Activated B cell treated with CpG ODN at 0.5 μM for 24 hours (primary cell): ENCODE measurements at regions of chr5 and their contacts with region 1.

Region 1: DNA sequence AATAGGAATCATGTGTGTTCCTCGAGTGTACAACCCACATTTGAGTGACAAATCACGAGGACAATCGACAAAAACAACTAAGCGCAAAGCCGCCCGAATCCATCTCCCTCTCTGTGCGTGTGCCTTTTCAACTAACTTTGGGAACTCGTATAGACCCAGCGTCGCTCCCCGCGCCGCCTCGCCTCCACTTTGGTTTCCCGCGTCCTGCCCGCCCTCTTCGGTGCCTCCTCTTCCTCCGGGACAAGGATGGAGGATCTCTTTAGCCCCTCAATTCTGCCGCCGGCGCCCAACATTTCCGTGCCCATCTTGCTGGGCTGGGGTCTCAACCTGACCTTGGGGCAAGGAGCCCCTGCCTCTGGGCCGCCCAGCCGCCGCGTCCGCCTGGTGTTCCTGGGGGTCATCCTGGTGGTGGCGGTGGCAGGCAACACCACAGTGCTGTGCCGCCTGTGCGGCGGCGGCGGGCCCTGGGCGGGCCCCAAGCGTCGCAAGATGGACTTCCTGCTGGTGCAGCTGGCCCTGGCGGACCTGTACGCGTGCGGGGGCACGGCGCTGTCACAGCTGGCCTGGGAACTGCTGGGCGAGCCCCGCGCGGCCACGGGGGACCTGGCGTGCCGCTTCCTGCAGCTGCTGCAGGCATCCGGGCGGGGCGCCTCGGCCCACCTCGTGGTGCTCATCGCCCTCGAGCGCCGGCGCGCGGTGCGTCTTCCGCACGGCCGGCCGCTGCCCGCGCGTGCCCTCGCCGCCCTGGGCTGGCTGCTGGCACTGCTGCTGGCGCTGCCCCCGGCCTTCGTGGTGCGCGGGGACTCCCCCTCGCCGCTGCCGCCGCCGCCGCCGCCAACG is at the start of gene GPR150:
- DNase-seq: peak; percentile 69
- ATAC-seq: peak; percentile 80
- H3K4me3 Mint-ChIP-seq: peak within 1 kb of the TSS; percentile 88
- H3K27ac Mint-ChIP-seq: peak within 1 kb of the TSS; percentile 62
- H3K4me1 Mint-ChIP-seq: peaks cover 28% of the 10 kb centered on the region
- H3K27me3 Mint-ChIP-seq: no peaks in the 10 kb centered on the region
- CTCF ChIP-seq: no peak
- total RNA-seq, gene GPR150: 0.60 and 1.1 TPM in 2 replicates

Region 2: GRCh38 chr5:95057615-95058014 is 562.6 kb before region 1 on chr5:
- CTCF ChIA-PET with region 1: no interaction called
- POLR2A ChIA-PET with region 1: no interaction called
- intact Hi-C with region 1: no loop called
- DNase-seq: no peak
- ATAC-seq: no peak
- H3K4me3 Mint-ChIP-seq: no peak overlapping the region
- H3K27ac Mint-ChIP-seq: no peak overlapping the region
- H3K4me1 Mint-ChIP-seq: no peaks in the 10 kb centered on the region
- H3K27me3 Mint-ChIP-seq: no peaks in the 10 kb centered on the region
- CTCF ChIP-seq: no peak

Region 3: GRCh38 chr5:95631991-95632675 is 11.9 kb after region 1 on chr5:
- CTCF ChIA-PET with region 1: no interaction called
- POLR2A ChIA-PET with region 1: interaction called, 8 read pairs
- intact Hi-C with region 1: loop called (anchors 1 kb)
- DNase-seq: no peak
- ATAC-seq: peak; percentile 97
- H3K4me3 Mint-ChIP-seq: peak overlapping the region; percentile 24
- H3K27ac Mint-ChIP-seq: peak overlapping the region; percentile 92
- H3K4me1 Mint-ChIP-seq: peaks cover 10% of the 10 kb centered on the region
- H3K27me3 Mint-ChIP-seq: peaks cover 1% of the 10 kb centered on the region
- CTCF ChIP-seq: no peak